Activated CD8-positive, alpha-beta T cell treated with anti-CD3 and anti-CD28 coated beads, Interleukin-2, amount 10 ng/mL, durations not matched to agents 7 days and 5 days (primary cell): ENCODE measurements at regions of chr4 and their contacts with region 1.

Region 1: GRCh38 chr4:152679414-152680281 is at the start of gene TMEM154:
- DNase-seq: peak; percentile 84
- ATAC-seq: peak; percentile 99
- H3K4me3 Mint-ChIP-seq: peak within 1 kb of the TSS; percentile 90
- H3K27ac Mint-ChIP-seq: peak within 1 kb of the TSS; percentile 94
- H3K4me1 Mint-ChIP-seq: peaks cover 44% of the 10 kb centered on the region
- H3K27me3 Mint-ChIP-seq: no peaks in the 10 kb centered on the region
- total RNA-seq, gene TMEM154: 20.0 to 22.2 TPM

Region 2: GRCh38 chr4:152283806-152284470 is 395.7 kb before region 1 on chr4:
- CTCF ChIA-PET with region 1: no interaction called
- POLR2A ChIA-PET with region 1: no interaction called
- DNase-seq: no peak
- ATAC-seq: no peak
- H3K4me3 Mint-ChIP-seq: no peak overlapping the region
- H3K27ac Mint-ChIP-seq: no peak overlapping the region
- H3K4me1 Mint-ChIP-seq: peaks cover 7% of the 10 kb centered on the region
- H3K27me3 Mint-ChIP-seq: no peaks in the 10 kb centered on the region

Region 3: DNA sequence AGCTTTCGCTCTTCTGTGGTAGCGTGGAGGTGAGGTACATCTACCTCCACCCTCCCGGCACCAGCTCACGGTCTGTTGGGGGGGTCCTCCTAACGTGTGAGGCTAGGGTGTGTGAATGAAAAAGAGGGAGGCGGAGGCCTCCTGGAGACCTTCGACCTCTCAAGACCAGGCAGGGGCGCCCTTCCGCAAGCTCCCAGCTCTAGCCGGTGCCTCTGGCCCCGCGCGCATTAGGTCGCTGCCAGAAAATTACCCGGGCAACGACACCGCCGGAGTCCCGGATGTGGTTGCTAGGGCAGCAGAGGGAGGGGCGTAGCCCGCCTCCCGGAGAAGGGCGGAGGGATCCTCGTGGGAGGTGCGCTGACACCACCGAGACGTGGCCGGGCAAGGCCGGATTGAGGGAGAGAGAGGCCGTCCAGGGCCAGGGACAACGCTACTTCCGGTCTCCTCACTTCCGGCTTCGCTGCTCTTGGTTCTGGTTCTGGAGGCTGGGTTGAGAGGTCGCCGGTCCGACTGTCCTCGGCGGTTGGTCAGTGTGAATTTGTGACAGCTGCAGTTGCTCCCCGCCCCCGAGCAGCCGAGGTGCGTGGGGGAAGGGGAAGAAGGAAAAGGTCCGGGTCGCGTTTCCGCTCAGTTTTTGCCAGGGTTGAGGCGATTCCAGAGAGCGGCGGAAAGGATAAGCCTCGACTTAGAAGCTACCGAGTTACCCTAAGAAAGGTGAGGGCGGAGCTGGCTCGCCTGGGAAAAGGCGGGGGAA is 100.0 kb after region 1 on chr4 and contains the starts of genes ARFIP1 and TIGD4:
- CTCF ChIA-PET with region 1: no interaction called
- POLR2A ChIA-PET with region 1: interaction called, 17 read pairs
- DNase-seq: peak; percentile 97
- ATAC-seq: peak; percentile 90
- H3K4me3 Mint-ChIP-seq: peak within 1 kb of the TSS; percentile 92
- H3K27ac Mint-ChIP-seq: peak within 1 kb of the TSS; percentile 90
- H3K4me1 Mint-ChIP-seq: peaks cover 40% of the 10 kb centered on the region
- H3K27me3 Mint-ChIP-seq: peaks cover 12% of the 10 kb centered on the region
- total RNA-seq, gene ARFIP1: 20.3 to 20.5 TPM
- total RNA-seq, gene TIGD4: 0.40 to 0.44 TPM